Activated naive CD4-positive, alpha-beta T cell treated with anti-CD3 and anti-CD28 coated beads for 36 hours (primary cell): ENCODE measurements at regions of chr11 and their contacts with region 1.

Region 1: GRCh38 chr11:130861902-130862860 is 54.1 kb downstream of the SNX19 start:
- DNase-seq: peak; percentile 91
- H3K4me3 Mint-ChIP-seq: no peak overlapping the region
- H3K27ac Mint-ChIP-seq: no peak overlapping the region
- H3K4me1 Mint-ChIP-seq: peaks cover 4% of the 10 kb centered on the region
- H3K27me3 Mint-ChIP-seq: peaks cover 6% of the 10 kb centered on the region

Region 2: GRCh38 chr11:129922674-129923073 is 939.5 kb before region 1 on chr11:
- CTCF ChIA-PET with region 1: no interaction called
- intact Hi-C with region 1: loop called (anchors 10 kb)
- DNase-seq: no peak
- H3K4me3 Mint-ChIP-seq: no peak overlapping the region
- H3K27ac Mint-ChIP-seq: no peak overlapping the region
- H3K4me1 Mint-ChIP-seq: peaks cover 8% of the 10 kb centered on the region
- H3K27me3 Mint-ChIP-seq: no peaks in the 10 kb centered on the region

Region 3: GRCh38 chr11:130434521-130435223 is 427.5 kb before region 1 on chr11:
- CTCF ChIA-PET with region 1: interaction called, 216 read pairs
- intact Hi-C with region 1: loop called (anchors 1 kb)
- DNase-seq: peak; percentile 79
- H3K4me3 Mint-ChIP-seq: no peak overlapping the region
- H3K27ac Mint-ChIP-seq: no peak overlapping the region
- H3K4me1 Mint-ChIP-seq: peaks cover 9% of the 10 kb centered on the region
- H3K27me3 Mint-ChIP-seq: peaks cover 11% of the 10 kb centered on the region

Region 4: GRCh38 chr11:130457623-130458409 is 404.4 kb before region 1 on chr11:
- CTCF ChIA-PET with region 1: interaction called, 11 read pairs
- intact Hi-C with region 1: no loop called
- DNase-seq: no peak
- H3K4me3 Mint-ChIP-seq: no peak overlapping the region
- H3K27ac Mint-ChIP-seq: no peak overlapping the region
- H3K4me1 Mint-ChIP-seq: no peaks in the 10 kb centered on the region
- H3K27me3 Mint-ChIP-seq: peaks cover 3% of the 10 kb centered on the region

Region 5: DNA sequence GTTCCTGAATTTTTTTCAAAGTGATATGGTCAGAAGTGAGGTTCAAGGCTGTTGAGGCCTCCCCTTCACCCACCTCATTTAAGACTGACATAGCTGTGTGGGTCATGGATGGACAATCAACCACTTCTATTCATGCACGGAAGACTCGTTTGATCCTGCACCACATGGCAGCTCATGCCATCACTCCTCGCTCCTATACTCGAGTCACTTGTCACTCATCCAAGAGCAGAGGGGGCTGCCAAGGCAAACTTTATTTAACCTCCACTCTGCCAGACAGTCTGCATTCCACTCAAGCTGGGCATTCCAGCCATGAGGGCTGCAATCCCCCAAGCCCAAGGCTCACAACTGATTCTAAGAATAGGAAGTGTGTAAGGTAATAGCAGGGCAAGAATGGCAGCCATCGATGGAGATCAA is 20.0 kb after region 1 on chr11:
- CTCF ChIA-PET with region 1: interaction called, 10 read pairs
- intact Hi-C with region 1: no loop called
- DNase-seq: no peak
- H3K4me3 Mint-ChIP-seq: no peak overlapping the region
- H3K27ac Mint-ChIP-seq: peak overlapping the region; percentile 19
- H3K4me1 Mint-ChIP-seq: peaks cover 14% of the 10 kb centered on the region
- H3K27me3 Mint-ChIP-seq: no peaks in the 10 kb centered on the region

Region 6: DNA sequence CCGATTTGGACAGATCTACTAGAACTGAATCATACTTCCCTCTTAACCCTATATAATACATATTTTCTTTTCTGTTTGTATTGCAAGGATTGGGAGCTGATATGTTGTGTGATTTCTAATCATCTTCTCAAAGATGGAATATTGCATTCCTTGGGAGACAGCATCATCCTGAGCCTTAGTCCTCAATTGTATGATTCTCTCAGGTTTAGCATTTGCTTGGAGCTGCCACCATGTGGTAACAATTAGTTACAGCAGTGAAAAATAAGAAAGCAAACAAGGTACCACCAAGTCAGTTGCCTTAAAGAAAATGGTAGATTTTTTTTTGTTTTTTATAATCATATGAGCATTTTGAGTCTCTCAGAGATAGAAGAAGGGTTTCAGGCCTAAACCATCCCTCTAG is 42.2 kb after region 1 on chr11:
- CTCF ChIA-PET with region 1: interaction called, 11 read pairs
- intact Hi-C with region 1: no loop called
- DNase-seq: no peak
- H3K4me3 Mint-ChIP-seq: no peak overlapping the region
- H3K27ac Mint-ChIP-seq: no peak overlapping the region
- H3K4me1 Mint-ChIP-seq: peaks cover 9% of the 10 kb centered on the region
- H3K27me3 Mint-ChIP-seq: no peaks in the 10 kb centered on the region

Region 7: GRCh38 chr11:131802440-131803115 is 940.4 kb after region 1 on chr11:
- CTCF ChIA-PET with region 1: no interaction called
- intact Hi-C with region 1: no loop called
- DNase-seq: no peak
- H3K4me3 Mint-ChIP-seq: no peak overlapping the region
- H3K27ac Mint-ChIP-seq: no peak overlapping the region
- H3K4me1 Mint-ChIP-seq: no peaks in the 10 kb centered on the region
- H3K27me3 Mint-ChIP-seq: peaks cover 2% of the 10 kb centered on the region